Head of caudate nucleus (tissue), 42 donors: ENCODE measurements at regions of chr12 and their contacts with region 1.

Region 1: GRCh38 chr12:46124848-46125619 is 134.7 kb upstream of the SCAF11 start:
- DNase-seq: peak in 39 of 42 donors; percentile 21 to 88 (median 69)

Region 2: DNA sequence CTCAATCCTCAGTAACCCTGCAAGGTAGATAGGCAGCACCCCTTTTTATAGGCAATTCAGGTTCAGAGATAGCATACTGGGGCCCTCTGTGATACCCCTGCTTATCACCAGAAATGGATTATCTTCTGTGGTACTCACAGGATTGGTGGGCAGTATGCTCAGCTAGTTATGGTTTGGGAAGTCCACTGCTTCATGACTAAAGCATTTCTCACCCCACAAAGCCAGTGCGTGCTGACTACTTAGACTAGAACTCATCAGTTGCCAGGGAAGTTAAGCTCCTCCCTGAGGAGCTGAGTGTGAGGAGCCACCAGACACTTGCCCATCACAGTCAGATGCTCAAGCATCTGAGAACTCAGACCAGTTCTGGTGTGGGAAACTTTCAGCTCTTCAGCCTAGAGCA is 210.9 kb before region 1 on chr12:
- intact Hi-C with region 1: no loop called
- DNase-seq: no peak

Region 3: DNA sequence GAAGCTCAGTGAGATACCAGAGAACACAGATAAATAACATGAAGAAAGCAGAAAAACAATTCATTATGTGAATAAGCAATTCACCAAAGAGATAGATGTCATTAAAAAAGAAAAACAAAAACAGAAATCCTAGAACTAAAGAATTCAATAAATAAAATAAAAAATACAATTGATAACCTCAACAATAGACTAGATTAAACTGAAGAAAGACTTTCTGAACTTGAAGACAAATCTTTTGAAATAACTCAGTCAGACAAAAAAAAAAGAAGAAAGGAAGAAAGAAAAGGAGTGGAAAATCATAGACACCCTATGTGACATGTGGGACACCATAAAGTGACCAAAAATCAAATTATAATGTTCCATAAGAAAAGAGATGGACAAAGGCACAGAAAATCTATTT is 157.8 kb after region 1 on chr12:
- intact Hi-C with region 1: no loop called
- DNase-seq: no peak

Region 4: GRCh38 chr12:46933947-46934346 is 808.9 kb after region 1 on chr12:
- intact Hi-C with region 1: loop called (anchors 10 kb)
- DNase-seq: peak in 6 of 42 donors; percentile 7 to 45 (median 26)